AG04449 (cell line): ENCODE measurements at regions of chr17 and their contacts with region 1.

Region 1: DNA sequence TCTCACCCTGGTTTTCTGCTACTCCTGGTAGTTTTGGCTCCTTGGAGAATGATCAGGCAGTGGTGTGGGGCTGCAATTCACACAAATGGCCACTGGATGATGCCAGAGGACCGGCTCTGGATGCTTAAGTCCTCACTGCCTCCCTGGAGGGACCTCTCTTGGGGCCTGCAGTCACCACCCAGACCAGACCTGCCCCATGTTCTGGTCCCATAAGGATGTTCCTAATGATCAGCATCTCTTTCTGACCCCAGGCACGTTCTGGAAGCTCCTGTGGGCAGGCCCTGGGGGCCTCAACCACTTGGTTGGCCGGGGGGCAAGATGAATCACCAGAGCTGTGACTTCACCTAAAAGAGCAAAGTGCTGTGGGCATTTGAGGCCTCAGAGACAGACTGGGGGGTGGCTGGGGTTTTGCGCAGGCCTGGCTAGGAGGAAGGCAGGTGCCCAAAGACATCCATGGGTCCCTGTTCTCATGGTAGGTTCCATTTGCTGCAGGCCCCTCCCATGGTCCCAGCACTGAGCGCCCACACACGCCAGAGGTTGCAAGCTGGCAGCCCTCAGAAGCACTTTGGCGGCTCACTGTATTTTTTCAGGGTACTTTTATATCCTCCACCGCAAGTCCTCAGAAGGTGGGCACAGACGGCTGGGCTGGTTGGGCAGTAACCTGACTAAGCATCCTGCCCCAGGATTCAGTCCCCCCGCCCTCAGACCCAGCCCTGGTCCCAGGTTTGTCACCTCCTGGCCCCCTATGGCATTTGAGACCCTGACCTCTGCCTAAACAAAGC is 53.2 kb downstream of the NT5M start:
- DNase-seq: peak; percentile 37
- H3K4me3 ChIP-seq: no peak overlapping the region
- CTCF ChIP-seq: peak; percentile 98

Region 2: DNA sequence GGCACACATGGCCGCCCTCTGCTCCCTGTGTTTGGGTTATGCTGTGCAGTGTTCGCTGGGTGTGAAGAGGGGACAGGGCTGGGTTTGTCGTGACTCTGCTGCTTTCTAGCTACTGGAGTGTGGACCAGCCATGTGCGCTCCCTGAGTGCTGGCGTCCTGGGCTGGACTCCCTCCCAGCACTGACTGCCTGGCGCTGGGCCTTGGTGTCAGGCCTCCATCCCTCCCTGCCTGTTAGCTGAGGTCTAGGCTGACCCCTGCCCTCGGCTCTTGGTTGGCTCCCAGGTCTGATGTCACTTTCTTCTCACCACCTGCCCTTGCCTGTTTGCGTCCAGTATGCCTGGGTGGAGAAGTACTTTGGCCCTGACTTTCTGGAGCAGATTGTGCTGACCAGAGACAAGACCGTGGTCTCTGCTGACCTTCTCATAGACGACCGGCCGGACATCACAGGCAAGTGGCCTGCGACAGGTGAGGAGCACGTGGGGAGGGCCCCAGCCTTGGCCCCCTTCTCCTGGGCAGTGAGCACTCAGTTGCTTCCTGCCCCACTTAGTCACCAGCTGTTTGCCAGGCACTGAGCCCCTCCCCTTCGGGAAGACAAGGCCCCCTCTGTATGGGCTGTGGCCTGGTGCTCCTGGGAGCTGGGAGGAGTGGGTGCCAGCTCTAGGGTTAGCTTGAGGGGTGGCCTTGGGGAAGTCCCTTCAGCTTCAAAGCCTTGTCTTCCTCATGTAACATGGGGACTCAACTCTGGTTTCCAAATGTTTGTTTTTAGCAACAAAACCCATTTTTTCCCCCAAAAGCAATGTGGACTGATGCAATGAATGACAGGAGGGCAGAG is 11.7 kb before region 1 on chr17:
- CTCF ChIA-PET with region 1: interaction called, 33 read pairs
- POLR2A ChIA-PET with region 1: no interaction called
- DNase-seq: no peak
- H3K4me3 ChIP-seq: no peak overlapping the region
- CTCF ChIP-seq: no peak

Region 3: GRCh38 chr17:17377071-17377967 is 21.0 kb after region 1 on chr17:
- CTCF ChIA-PET with region 1: interaction called, 25 read pairs
- POLR2A ChIA-PET with region 1: no interaction called
- DNase-seq: no peak
- H3K4me3 ChIP-seq: no peak overlapping the region
- CTCF ChIP-seq: no peak

Region 4: DNA sequence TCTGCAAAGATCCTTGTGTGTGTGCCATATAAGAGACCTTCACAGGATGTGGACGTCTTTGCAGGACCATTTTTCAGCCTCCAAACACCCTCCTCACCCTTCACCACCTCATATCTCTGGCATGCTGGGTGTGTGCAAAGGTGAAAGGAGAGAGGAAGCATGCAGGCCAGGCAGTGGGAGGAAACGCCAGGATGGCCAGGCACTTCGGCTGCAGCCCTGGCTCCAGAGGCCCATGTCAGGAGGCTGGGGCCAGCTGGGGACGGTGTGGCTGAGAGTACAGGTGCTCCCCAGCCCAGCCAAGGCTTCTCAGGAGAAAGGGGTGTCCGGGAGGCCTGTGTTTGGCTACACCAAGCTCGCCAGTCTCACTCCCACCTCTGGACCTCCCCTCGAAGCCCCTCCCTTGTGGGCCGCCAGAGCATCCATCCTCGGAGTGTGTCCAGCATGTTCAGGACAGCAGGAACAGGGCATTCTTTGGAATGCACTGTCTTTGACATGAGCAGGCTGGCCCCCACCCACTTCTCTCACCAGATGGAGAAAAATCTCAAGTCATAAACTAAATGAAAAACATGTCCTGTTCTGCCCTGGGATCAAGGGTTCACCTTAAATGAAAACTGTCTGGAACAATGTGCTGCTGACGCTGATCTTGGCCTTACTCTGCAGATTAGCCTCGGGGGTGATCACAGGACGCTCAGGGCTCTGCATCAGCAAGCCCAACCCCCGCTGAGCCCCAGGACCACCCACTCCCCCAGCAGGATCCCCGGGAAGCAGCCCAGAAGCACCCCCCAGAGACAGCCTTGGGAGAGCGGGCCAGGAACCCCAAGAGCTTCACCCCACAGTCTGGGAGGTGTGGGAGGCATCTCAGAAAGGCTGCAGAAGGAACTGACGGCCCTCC is 219.3 kb after region 1 on chr17:
- CTCF ChIA-PET with region 1: interaction called, 125 read pairs
- POLR2A ChIA-PET with region 1: no interaction called
- DNase-seq: no peak
- H3K4me3 ChIP-seq: no peak overlapping the region
- CTCF ChIP-seq: no peak

Region 5: DNA sequence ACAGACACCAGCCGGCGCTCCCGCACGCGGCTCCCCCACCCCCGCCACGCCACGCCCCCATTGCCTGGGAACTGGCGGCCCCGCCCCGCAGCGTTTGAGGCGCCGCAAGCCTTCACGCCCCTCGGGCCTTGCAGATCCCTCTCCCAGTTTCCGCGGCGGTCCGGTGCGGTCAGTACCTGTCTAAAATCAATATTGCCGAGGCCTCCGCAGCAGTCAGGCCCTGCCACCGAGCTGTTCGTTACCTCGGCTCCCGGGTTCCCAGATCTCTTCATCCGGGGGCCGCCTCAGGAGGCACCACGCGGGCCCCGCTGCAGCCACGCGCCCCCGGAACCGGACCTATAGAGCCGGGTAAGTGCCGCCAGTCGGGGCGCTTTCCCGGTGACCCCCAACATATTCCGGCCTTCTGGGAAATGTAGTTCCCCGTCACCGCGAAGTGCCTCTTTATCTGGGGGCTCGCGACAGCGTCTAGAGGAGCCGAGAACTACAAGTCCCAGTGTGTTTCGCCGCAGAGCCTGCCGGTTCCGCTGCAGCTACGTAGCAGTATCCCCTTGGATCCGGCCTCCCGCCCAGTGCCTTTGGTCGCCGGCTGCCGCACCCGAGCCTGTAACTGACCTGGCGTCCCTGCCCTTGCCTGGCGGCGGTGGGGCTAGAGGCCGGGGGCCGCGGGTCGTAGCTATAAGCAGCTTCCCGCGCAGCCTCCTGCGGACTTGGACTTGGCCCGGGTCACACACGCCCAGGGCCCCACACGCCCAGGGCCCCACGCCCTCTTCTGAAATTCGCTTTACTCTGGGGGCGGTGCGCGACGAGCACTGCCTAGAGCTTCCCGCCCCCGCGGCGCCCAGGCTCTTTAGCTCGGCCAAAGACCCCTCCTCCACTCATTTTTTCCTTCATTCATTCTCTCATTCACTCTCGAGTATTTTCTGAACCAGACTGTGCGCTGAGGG is 235.3 kb after region 1 on chr17 and contains the start of gene PEMT:
- CTCF ChIA-PET with region 1: interaction called, 13 read pairs
- POLR2A ChIA-PET with region 1: no interaction called
- DNase-seq: peak; percentile 94
- H3K4me3 ChIP-seq: peak within 1 kb of the TSS; percentile 85
- CTCF ChIP-seq: no peak

Region 6: GRCh38 chr17:17641621-17642409 is 285.5 kb after region 1 on chr17:
- CTCF ChIA-PET with region 1: interaction called, 365 read pairs
- POLR2A ChIA-PET with region 1: no interaction called
- DNase-seq: peak; percentile 19
- H3K4me3 ChIP-seq: no peak overlapping the region
- CTCF ChIP-seq: peak; percentile 85